ENCODE measurements at regions of chr5 and their contacts with region 1.

Region 1: GRCh38 chr5:100623719-100624118 is 88.5 kb downstream of the FAM174A start:
- DNase-seq: no peak
- ATAC-seq: no peak
- H3K4me3 ChIP-seq: no peak overlapping the region
- H3K27ac ChIP-seq: no peak overlapping the region
- H3K4me1 ChIP-seq: no peaks in the 10 kb centered on the region
- H3K27me3 ChIP-seq: no peaks in the 10 kb centered on the region
- CTCF ChIP-seq: peak; percentile 18 to 68 (median 47)
- POLR2A ChIP-seq: no peak

Region 2: DNA sequence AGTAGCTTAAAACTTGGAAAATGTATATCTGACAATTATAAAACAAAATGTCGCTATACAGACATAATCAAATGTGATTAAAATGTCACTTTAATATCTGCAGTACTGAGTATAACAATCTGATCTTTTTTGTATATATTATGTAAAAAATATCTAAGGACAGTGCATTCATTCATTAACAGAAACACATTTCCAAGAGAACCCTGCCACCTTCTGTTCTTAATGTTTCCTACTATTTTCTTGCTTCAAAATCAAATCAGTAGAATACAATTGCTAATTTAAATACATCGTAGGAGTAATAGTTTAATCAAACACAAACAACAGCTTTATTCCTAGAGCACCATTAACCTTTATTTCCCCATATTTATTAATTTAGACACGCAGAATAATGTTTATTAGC is 422.0 kb after region 1 on chr5:
- intact Hi-C with region 1: loop called in 3 of 10 experiments (anchors 10 kb)
- DNase-seq: no peak
- ATAC-seq: no peak
- H3K4me3 ChIP-seq: no peak overlapping the region
- H3K27ac ChIP-seq: no peak overlapping the region
- H3K4me1 ChIP-seq: no peaks in the 10 kb centered on the region
- H3K27me3 ChIP-seq: no peaks in the 10 kb centered on the region
- CTCF ChIP-seq: peak in 10 of 12 donors; percentile 13 to 50 (median 32)
- POLR2A ChIP-seq: no peak

Region 3: DNA sequence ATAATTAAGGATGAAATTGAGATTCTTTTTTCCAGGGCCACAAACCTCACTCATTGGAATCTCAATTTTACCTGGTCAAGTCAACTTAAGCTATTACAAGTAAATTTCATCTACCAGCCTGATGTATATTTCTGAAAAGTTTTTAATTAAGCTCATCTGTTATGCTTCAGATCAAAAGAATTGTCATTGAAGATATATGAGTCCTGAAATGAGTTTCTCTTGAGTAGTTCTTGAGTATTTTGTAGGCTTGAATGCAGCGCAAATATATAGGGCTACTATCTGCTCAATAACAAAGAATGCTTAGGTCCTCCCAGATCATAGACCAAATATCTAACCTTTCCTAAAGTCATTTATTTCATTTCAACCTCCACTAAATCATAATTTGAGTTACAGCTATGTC is 761.6 kb after region 1 on chr5:
- intact Hi-C with region 1: loop called in 2 of 10 experiments (anchors 10 kb)
- DNase-seq: no peak
- ATAC-seq: no peak
- H3K4me3 ChIP-seq: no peak overlapping the region
- H3K27ac ChIP-seq: no peak overlapping the region
- H3K4me1 ChIP-seq: no peaks in the 10 kb centered on the region
- H3K27me3 ChIP-seq: no peaks in the 10 kb centered on the region
- CTCF ChIP-seq: no peak
- POLR2A ChIP-seq: no peak

Region 4: DNA sequence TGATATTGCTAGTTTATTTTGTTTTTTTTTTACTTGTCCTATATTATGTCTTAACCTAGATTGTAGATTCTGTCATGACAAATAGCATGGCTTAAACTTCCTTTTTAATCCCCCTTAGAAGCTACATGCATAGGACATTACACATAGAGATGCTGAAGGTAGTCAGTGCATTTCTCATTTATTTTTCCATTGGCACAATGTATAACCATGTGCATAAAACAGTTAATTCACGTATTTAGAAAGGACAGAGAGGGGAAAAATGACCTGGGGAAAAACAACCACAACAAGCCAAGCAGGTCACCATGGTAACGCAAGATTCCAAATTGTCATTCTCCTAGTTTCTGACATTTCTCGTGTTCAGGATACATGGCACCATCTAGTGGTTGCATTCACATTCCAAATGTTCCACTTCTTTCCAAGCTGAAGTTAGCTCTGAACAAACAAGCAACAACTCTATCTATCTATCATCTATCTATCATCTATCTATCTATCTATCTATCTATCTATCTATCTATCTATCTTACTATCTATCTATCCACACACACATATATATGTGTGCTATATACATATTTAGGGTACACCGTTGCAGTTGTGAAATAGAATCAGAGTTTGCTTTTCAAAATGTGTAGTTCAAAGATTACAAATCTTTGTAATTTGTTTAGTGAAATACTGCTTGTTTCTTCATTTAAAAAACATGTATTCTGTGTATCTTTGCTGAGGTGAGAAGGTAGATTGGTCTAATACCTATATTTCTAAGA is 766.6 kb after region 1 on chr5:
- intact Hi-C with region 1: loop called in 2 of 10 experiments (anchors 10 kb)
- DNase-seq: peak in 1 of 5 donors; percentile 6
- ATAC-seq: no peak
- H3K4me3 ChIP-seq: no peak overlapping the region
- H3K27ac ChIP-seq: no peak overlapping the region
- H3K4me1 ChIP-seq: no peaks in the 10 kb centered on the region
- H3K27me3 ChIP-seq: no peaks in the 10 kb centered on the region
- CTCF ChIP-seq: peak; percentile 37 to 70 (median 53)
- POLR2A ChIP-seq: no peak

Measured in heart left ventricle (tissue), 16 donors.